Natural killer cell (primary cell): ENCODE measurements at regions of chr2 and their contacts with region 1.

Region 1: GRCh38 chr2:212958757-212959295 is 192.6 kb downstream of the IKZF2 start:
- DNase-seq: peak in 1 of 2 donors; percentile 27
- ATAC-seq: peak; percentile 48 to 60 (median 52)
- H3K4me3 ChIP-seq: no peak overlapping the region
- H3K4me3 Mint-ChIP-seq: peak overlapping the region; percentile 89
- H3K27ac ChIP-seq: peak overlapping the region; percentile 70
- H3K27ac Mint-ChIP-seq: peak overlapping the region; percentile 89 to 92
- H3K4me1 ChIP-seq: peaks cover 21% of the 10 kb centered on the region
- H3K4me1 Mint-ChIP-seq: peaks cover 64 to 73% of the 10 kb centered on the region in 2 donors
- H3K27me3 ChIP-seq: no peaks in the 10 kb centered on the region
- H3K27me3 Mint-ChIP-seq: no peaks in the 10 kb centered on the region
- CTCF ChIP-seq: no peak

Region 2: DNA sequence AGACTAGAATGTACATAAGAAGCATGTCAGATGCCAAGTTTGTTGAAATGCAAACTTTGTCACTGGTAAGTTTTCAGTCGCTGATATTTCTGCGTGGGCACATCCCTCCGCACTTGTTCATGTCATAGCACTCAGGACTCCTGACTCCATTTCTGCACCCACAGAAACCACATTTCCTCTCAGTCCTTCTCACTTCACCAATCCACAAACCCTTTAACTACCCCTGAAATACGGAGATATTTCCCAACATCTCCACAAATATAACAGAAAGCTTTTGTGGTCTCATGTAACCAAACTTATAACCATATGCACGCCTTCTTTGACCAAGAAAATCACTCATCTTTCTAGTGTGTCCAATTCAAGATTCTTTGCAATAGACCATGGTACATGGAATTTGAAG is 143.4 kb before region 1 on chr2:
- intact Hi-C with region 1: loop called (anchors 2 kb)
- DNase-seq: peak in 1 of 2 donors; percentile 38
- ATAC-seq: peak; percentile 43 to 75 (median 61)
- H3K4me3 ChIP-seq: no peak overlapping the region
- H3K4me3 Mint-ChIP-seq: peak overlapping the region; percentile 75
- H3K27ac ChIP-seq: peak overlapping the region; percentile 77
- H3K27ac Mint-ChIP-seq: peak overlapping the region; percentile 91
- H3K4me1 ChIP-seq: peaks cover 30% of the 10 kb centered on the region
- H3K4me1 Mint-ChIP-seq: peaks cover 78 to 79% of the 10 kb centered on the region in 2 donors
- H3K27me3 ChIP-seq: no peaks in the 10 kb centered on the region
- H3K27me3 Mint-ChIP-seq: no peaks in the 10 kb centered on the region
- CTCF ChIP-seq: no peak